Naive thymus-derived CD4-positive, alpha-beta T cell (primary cell): ENCODE measurements at regions of chr4 and their contacts with region 1.

Region 1: DNA sequence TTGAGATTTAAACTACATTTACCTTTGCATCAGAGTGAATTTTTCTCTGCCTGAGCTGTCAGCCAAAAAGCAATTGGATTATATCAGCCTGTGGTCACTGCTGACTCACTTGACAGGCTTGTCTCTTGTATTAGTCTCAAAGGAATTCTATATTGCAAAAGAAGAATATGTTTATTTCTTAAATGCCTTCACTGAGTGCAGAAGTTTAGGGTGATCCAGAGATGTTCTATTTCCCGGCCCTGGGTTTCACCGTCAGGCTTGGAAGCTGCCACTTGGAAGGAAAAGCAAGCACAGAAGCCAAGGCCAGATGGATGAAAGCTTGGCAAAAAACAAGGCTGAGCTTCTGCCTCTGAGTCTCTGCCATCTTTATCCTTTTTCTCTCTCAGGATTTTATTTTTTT is 80.9 kb downstream of the FAM114A1 start:
- DNase-seq: no peak
- ATAC-seq: no peak
- H3K4me3 ChIP-seq: no peak overlapping the region
- H3K4me3 Mint-ChIP-seq: no peak overlapping the region
- H3K27ac ChIP-seq: no peak overlapping the region
- H3K27ac Mint-ChIP-seq: peak overlapping the region in 5 of 9 donors; percentile 25 to 99 (median 91)
- H3K4me1 ChIP-seq: peaks cover 6 to 9% of the 10 kb centered on the region in 2 donors
- H3K4me1 Mint-ChIP-seq: peaks cover 4 to 44% (median 19%) of the 10 kb centered on the region in 7 donors
- H3K27me3 ChIP-seq: no peaks in the 10 kb centered on the region
- H3K27me3 Mint-ChIP-seq: peaks cover 0 to 3% (median 1%) of the 10 kb centered on the region in 5 donors

Region 2: DNA sequence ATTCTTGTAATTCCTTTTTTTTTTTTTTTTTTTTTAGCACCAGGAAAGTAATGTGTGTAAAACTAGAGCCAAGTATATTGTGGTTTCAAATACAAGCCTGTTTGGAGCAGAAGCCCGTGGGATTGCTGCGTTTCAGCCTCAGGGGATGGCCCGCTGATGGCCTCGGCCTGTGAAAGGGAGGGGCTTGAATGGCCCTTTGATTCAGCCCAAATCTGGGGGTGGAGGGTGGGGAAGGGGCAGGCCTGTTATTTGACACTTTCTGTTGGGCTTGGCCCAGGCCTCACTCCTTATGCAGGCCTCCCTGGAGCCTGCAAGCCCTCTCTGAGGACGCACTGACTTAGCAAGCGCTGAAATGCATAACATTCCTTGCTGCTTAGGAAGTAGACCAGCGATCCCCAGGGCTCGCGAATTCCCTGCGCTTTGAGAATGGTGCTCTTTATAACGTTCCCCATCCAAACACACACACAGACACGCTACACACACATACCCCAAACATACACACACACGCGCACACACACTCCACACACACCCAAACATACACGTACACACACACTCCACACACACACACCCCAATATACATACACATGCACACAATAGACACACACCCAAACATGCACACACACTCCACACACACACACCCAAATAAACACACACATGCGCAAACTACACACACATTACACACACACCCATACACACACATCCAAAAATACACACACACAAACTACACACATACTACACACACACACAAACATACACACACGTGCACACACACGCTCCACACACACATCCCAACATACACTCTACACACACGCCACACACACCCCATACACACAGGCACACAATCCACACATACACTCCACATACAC is 195.4 kb before region 1 on chr4:
- CTCF ChIA-PET with region 1: no interaction called
- POLR2A ChIA-PET with region 1: no interaction called
- intact Hi-C with region 1: no loop called
- DNase-seq: no peak
- ATAC-seq: no peak
- H3K4me3 ChIP-seq: no peak overlapping the region
- H3K4me3 Mint-ChIP-seq: no peak overlapping the region
- H3K27ac ChIP-seq: no peak overlapping the region
- H3K27ac Mint-ChIP-seq: no peak overlapping the region
- H3K4me1 ChIP-seq: no peaks in the 10 kb centered on the region
- H3K4me1 Mint-ChIP-seq: peaks cover 0 to 24% (median 0%) of the 10 kb centered on the region in 7 donors
- H3K27me3 ChIP-seq: no peaks in the 10 kb centered on the region
- H3K27me3 Mint-ChIP-seq: no peaks in the 10 kb centered on the region

Region 3: DNA sequence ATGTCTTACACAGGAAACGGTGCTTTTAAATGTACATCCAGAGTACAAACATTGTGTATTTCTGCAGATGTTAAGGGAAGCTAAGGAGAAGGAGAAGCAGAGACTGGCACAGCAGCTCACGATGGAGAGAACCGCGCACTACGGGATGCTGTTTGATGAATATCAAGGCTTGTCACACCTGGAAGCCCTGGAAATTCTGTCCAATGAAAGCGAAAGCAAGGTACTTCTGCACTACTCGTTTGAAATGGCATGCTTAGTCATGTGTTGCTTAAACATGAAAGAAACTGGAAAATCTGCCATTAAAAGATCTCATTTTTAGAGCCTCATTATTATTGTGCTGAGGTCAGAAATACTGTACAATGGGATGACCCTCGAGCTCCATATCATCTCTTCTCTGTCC is 33.7 kb before region 1 on chr4:
- CTCF ChIA-PET with region 1: no interaction called
- POLR2A ChIA-PET with region 1: interaction called, 3 read pairs
- intact Hi-C with region 1: loop called in 1 of 2 experiments (anchors 2 kb)
- DNase-seq: peak in 1 of 9 donors; percentile 10
- ATAC-seq: no peak
- H3K4me3 ChIP-seq: no peak overlapping the region
- H3K4me3 Mint-ChIP-seq: peak overlapping the region in 7 of 10 donors; percentile 30 to 78 (median 58)
- H3K27ac ChIP-seq: no peak overlapping the region
- H3K27ac Mint-ChIP-seq: peak overlapping the region in 2 of 9 donors; percentile 79 to 88
- H3K4me1 ChIP-seq: peaks cover 0 to 4% of the 10 kb centered on the region in 2 donors
- H3K4me1 Mint-ChIP-seq: peaks cover 0 to 12% (median 9%) of the 10 kb centered on the region in 7 donors
- H3K27me3 ChIP-seq: no peaks in the 10 kb centered on the region
- H3K27me3 Mint-ChIP-seq: no peaks in the 10 kb centered on the region

Region 4: DNA sequence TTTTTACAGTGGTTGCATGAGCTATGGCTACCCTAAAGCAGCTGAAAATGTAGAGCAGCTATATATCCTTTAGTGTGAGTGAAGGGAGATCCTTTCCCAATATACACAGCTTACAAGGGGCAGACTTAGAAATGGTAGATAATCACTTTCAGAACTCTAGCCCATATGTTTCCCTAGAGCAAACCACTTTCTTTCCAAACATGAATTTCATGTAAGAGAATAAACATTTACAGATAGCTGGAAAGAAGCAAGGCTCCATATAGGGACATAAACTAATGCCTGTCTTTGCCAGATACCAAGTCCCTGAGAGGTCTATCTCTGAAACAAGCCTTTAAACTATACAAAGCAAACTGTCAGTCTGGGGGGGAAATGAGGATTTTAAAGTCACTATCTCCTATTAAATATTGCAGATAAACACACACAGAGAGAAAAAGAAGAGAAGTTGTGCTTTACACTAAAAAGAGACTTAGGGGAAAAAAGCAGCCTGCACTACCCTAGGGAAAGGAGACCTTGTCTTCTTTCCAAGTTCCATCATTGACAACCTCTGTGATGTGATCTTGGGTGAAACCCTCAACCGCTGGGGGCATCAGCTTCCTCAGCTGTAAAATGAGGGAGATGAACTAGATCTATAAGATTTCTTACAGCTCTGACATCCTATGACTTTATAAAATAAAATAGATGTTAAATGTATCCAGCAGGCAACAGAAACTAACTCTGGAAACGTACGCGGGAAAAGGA is 10.1 kb after region 1 on chr4:
- CTCF ChIA-PET with region 1: interaction called, 4 read pairs
- POLR2A ChIA-PET with region 1: no interaction called
- intact Hi-C with region 1: loop called in 1 of 2 experiments (anchors 1 kb)
- DNase-seq: peak in 1 of 9 donors; percentile 19
- ATAC-seq: no peak
- H3K4me3 ChIP-seq: no peak overlapping the region
- H3K4me3 Mint-ChIP-seq: peak overlapping the region in 2 of 10 donors; percentile 25 to 65
- H3K27ac ChIP-seq: no peak overlapping the region
- H3K27ac Mint-ChIP-seq: peak overlapping the region in 2 of 9 donors; percentile 93 to 98
- H3K4me1 ChIP-seq: no peaks in the 10 kb centered on the region
- H3K4me1 Mint-ChIP-seq: peaks cover 2 to 49% (median 6%) of the 10 kb centered on the region in 7 donors
- H3K27me3 ChIP-seq: no peaks in the 10 kb centered on the region
- H3K27me3 Mint-ChIP-seq: peaks cover 0 to 3% (median 2%) of the 10 kb centered on the region in 5 donors

Region 5: DNA sequence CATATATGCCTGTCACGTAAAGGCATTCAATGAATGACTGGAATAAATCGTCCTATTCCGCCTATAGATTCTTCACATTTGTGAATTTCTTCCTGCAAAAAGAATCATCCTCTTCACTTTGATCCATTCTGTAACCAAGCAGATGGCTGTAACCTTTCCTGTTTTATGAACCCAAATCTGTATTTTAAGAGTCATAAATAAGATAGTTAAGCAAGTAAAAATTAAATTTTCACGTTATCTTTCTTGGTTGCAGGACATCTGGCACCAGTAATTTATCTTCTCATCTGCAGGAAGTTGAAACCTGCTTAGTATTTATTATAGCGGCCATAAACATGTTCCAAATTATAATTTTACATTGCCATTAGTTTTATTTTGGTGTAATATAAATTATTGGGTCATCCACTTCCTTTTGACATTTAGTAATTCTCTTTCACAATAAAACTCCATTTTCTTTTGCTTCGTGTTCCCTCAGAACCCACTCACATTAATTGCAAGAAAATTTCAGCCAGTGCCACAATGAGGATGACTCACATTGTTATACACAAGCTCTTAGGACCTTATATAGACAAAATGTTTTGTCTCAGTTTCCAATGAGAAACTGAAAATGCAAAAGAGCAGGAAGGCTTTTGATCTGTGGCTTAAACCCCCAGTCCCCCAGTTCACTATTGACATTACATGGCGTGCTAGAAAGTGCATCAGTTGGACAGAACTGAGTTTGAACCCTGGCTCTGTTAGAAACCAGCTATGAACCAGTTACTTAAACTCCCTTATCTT is 32.5 kb after region 1 on chr4:
- CTCF ChIA-PET with region 1: no interaction called
- POLR2A ChIA-PET with region 1: interaction called, 3 read pairs
- intact Hi-C with region 1: loop called in 1 of 2 experiments (anchors 2 kb)
- DNase-seq: no peak
- ATAC-seq: no peak
- H3K4me3 ChIP-seq: no peak overlapping the region
- H3K4me3 Mint-ChIP-seq: peak overlapping the region in 1 of 10 donors; percentile 50
- H3K27ac ChIP-seq: no peak overlapping the region
- H3K27ac Mint-ChIP-seq: peak overlapping the region in 2 of 9 donors; percentile 28 to 65
- H3K4me1 ChIP-seq: no peaks in the 10 kb centered on the region
- H3K4me1 Mint-ChIP-seq: peaks cover 2 to 55% (median 5%) of the 10 kb centered on the region in 7 donors
- H3K27me3 ChIP-seq: no peaks in the 10 kb centered on the region
- H3K27me3 Mint-ChIP-seq: no peaks in the 10 kb centered on the region

Region 6: DNA sequence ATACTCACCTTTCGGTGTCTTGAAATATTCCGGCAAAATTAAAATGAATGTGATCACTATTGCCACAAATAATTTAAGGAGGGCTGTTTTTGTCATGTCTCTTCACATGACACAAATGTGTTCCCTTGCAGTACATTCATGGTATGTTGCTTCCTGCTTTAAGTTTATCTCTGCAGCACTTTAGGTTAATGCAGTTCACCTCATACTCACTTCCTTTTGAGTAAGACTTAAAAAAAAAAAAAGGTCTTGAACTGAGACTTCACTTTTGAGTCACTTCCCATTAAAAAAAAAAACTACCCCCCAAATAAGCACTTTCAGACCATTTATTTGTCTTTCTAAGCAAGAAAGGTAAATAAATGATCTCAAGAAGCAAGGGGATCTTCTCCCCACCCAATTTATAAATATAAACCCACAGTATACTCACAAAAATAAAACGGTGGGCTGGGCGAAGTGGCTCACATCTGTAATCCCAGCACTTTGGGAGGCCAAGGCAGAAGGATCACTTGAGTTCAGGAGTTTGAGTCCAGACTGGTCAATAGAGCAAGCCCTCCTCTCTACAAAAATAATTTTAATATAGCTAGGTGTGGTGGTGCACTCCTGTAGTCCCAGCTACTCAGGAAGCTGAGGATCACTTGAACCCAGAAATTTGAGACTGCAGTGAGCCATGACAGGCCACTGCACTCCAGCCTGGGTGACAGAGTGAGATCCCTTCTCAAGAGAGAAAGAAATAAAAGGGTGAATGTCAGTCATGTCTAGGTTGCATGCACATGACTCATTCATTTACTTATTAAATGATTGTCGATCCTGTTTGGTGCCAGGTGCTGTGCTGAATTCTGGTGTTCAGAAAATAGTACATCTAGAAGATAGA is 83.9 kb after region 1 on chr4 and contains the start of gene TMEM156:
- CTCF ChIA-PET with region 1: no interaction called
- POLR2A ChIA-PET with region 1: no interaction called
- intact Hi-C with region 1: loop called (anchors 1 to 5 kb)
- DNase-seq: peak in 7 of 9 donors; percentile 59 to 77 (median 70)
- ATAC-seq: peak; percentile 93
- H3K4me3 ChIP-seq: peak within 1 kb of the TSS; percentile 61
- H3K4me3 Mint-ChIP-seq: peak within 1 kb of the TSS; percentile 65 to 89 (median 82)
- H3K27ac ChIP-seq: peak within 1 kb of the TSS; percentile 55
- H3K27ac Mint-ChIP-seq: peak within 1 kb of the TSS; percentile 19 to 93 (median 87)
- H3K4me1 ChIP-seq: peaks cover 29 to 45% of the 10 kb centered on the region in 2 donors
- H3K4me1 Mint-ChIP-seq: peaks cover 16 to 55% (median 44%) of the 10 kb centered on the region in 7 donors
- H3K27me3 ChIP-seq: no peaks in the 10 kb centered on the region
- H3K27me3 Mint-ChIP-seq: no peaks in the 10 kb centered on the region
- total RNA-seq, gene TMEM156: 8.6 to 36.4 (median 9.4) TPM

Region 7: GRCh38 chr4:39365830-39366771 is 417.6 kb after region 1 on chr4 and contains the start of gene RFC1:
- CTCF ChIA-PET with region 1: no interaction called
- POLR2A ChIA-PET with region 1: no interaction called
- intact Hi-C with region 1: no loop called
- DNase-seq: peak; percentile 84 to 92 (median 91)
- ATAC-seq: peak; percentile 98
- H3K4me3 ChIP-seq: peak within 1 kb of the TSS; percentile 69
- H3K4me3 Mint-ChIP-seq: peak within 1 kb of the TSS; percentile 88 to 98 (median 94)
- H3K27ac ChIP-seq: peak within 1 kb of the TSS; percentile 84
- H3K27ac Mint-ChIP-seq: peak within 1 kb of the TSS; percentile 72 to 97 (median 92)
- H3K4me1 ChIP-seq: peaks cover 12 to 19% of the 10 kb centered on the region in 2 donors
- H3K4me1 Mint-ChIP-seq: peaks cover 33 to 59% (median 41%) of the 10 kb centered on the region in 7 donors
- H3K27me3 ChIP-seq: no peaks in the 10 kb centered on the region
- H3K27me3 Mint-ChIP-seq: no peaks in the 10 kb centered on the region
- total RNA-seq, gene RFC1: 62.4 to 66.4 (median 64.3) TPM